ENCODE measurements at regions of chr14 and their contacts with region 1.

Region 1: GRCh38 chr14:75800792-75801191 is 139.7 kb downstream of the TTLL5 start:
- DNase-seq: peak in 1 of 2 experiments; percentile 72
- H3K4me3 ChIP-seq: no peak overlapping the region
- H3K27ac ChIP-seq: no peak overlapping the region; the same call in 1 of the 2 replicates
- H3K4me1 ChIP-seq: no peaks in the 10 kb centered on the region
- H3K27me3 ChIP-seq: no peaks in the 10 kb centered on the region
- CTCF ChIP-seq: peak; percentile 42 to 73 (median 55)
- EP300 ChIP-seq: no peak
- POLR2A ChIP-seq: no peak
- RAD21 ChIP-seq: peak; percentile 35 to 45

Region 2: GRCh38 chr14:75811872-75812499 is 11.2 kb after region 1 on chr14:
- CTCF ChIA-PET with region 1: interaction called, 13 read pairs
- POLR2A ChIA-PET with region 1: no interaction called
- DNase-seq: no peak
- H3K4me3 ChIP-seq: no peak overlapping the region
- H3K27ac ChIP-seq: peak overlapping the region; percentile 37; the same call in 1 of the 2 replicates
- H3K4me1 ChIP-seq: peaks cover 3 to 12% (median 8%) of the 10 kb centered on the region in 4 experiments; a peak in 6 of 7 replicates
- H3K27me3 ChIP-seq: no peaks in the 10 kb centered on the region
- CTCF ChIP-seq: no peak
- EP300 ChIP-seq: no peak
- POLR2A ChIP-seq: no peak
- RAD21 ChIP-seq: no peak

Region 3: GRCh38 chr14:75825147-75825592 is 24.4 kb after region 1 on chr14:
- CTCF ChIA-PET with region 1: interaction called, 10 read pairs
- POLR2A ChIA-PET with region 1: no interaction called
- DNase-seq: no peak
- H3K4me3 ChIP-seq: no peak overlapping the region
- H3K27ac ChIP-seq: no peak overlapping the region
- H3K4me1 ChIP-seq: no peaks in the 10 kb centered on the region
- H3K27me3 ChIP-seq: peaks cover 0 to 1% (median 0%) of the 10 kb centered on the region in 4 experiments; a peak in 1 of 7 replicates
- CTCF ChIP-seq: no peak
- EP300 ChIP-seq: no peak
- POLR2A ChIP-seq: no peak
- RAD21 ChIP-seq: no peak

Region 4: GRCh38 chr14:75879031-75879430 is 78.2 kb after region 1 on chr14:
- CTCF ChIA-PET with region 1: interaction called, 13 read pairs
- POLR2A ChIA-PET with region 1: no interaction called
- DNase-seq: no peak
- H3K4me3 ChIP-seq: no peak overlapping the region
- H3K27ac ChIP-seq: no peak overlapping the region
- H3K4me1 ChIP-seq: no peaks in the 10 kb centered on the region
- H3K27me3 ChIP-seq: no peaks in the 10 kb centered on the region
- CTCF ChIP-seq: no peak
- EP300 ChIP-seq: no peak
- POLR2A ChIP-seq: no peak
- RAD21 ChIP-seq: no peak

Measured in H1 (cell line).